ENCODE measurements at regions of chr12 and their contacts with region 1.

Region 1: GRCh38 chr12:40107098-40107802 is 1.4 kb upstream of the SLC2A13 start:
- DNase-seq: peak; percentile 83 to 90
- ATAC-seq: peak in 3 of 4 donors; percentile 57 to 74 (median 57)
- H3K4me3 ChIP-seq: peak overlapping the region; percentile 92
- H3K27ac ChIP-seq: peak overlapping the region; percentile 78
- H3K4me1 ChIP-seq: peaks cover 3% of the 10 kb centered on the region
- H3K27me3 ChIP-seq: no peaks in the 10 kb centered on the region
- CTCF ChIP-seq: peak; percentile 93

Region 2: GRCh38 chr12:39764944-39765560 is 342.2 kb before region 1 on chr12:
- intact Hi-C with region 1: loop called (anchors 5 to 10 kb)
- DNase-seq: no peak
- ATAC-seq: no peak
- H3K4me3 ChIP-seq: no peak overlapping the region
- H3K27ac ChIP-seq: no peak overlapping the region
- H3K4me1 ChIP-seq: no peaks in the 10 kb centered on the region
- H3K27me3 ChIP-seq: no peaks in the 10 kb centered on the region
- CTCF ChIP-seq: peak; percentile 72

Region 3: DNA sequence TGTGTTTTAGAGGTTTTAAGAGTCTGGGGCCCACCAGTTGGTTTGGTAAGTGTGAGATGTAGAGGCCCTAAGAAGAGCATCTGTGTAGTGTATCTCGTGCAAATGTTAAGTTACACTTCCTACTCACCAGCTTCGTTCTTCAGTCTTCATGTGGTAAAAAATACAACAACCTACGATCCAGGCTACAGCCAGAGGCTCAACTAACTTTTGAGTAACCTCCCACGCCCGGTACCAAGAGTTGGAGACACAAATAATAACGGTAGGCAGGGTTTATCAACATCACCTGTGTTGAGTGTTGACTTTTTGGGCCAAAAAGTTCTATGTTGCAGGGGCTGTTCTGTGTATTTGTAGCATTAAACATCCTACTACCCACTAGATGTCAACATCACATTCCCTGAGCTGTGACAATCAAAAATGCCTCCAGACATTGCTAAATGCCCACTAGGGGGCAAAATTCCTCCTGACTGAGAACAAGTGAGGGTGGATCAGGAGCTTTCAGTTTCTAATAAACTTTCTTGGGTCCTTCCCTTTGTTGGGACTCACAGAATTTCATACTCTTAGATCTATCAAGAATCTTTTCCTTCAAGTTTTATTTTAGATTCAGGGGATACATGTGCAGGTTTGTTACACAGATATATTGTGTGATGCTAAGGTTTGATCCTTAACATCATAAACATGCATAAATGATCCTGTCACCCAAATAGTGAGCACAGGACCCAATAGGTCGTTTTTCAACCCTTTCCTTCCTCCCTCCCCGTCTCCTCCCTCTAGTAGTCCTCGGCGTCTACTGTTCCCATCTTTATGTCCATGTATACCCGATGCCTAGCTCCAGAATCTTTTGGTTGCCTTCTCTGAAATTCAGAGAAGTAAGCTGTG is 96.1 kb before region 1 on chr12:
- intact Hi-C with region 1: loop called (anchors 2 kb)
- DNase-seq: no peak
- ATAC-seq: peak; percentile 59 to 93 (median 75)
- H3K4me3 ChIP-seq: peak overlapping the region; percentile 32
- H3K27ac ChIP-seq: no peak overlapping the region
- H3K4me1 ChIP-seq: no peaks in the 10 kb centered on the region
- H3K27me3 ChIP-seq: no peaks in the 10 kb centered on the region
- CTCF ChIP-seq: peak; percentile 63